GM12878 (cell line): ENCODE measurements at regions of chr3 and their contacts with region 1.

Region 1: GRCh38 chr3:177057768-177058167 is 139.5 kb downstream of the TBL1XR1 start:
- DNase-seq: peak; percentile 60
- ATAC-seq: peak; percentile 94
- H3K4me3 ChIP-seq: no peak overlapping the region
- H3K27ac ChIP-seq: peak overlapping the region; percentile 42; the same call in 1 of the 2 replicates
- H3K4me1 ChIP-seq: peaks cover 13% of the 10 kb centered on the region; the same call in 1 of the 2 replicates
- H3K27me3 ChIP-seq: no peaks in the 10 kb centered on the region
- CTCF ChIP-seq: no peak
- EP300 ChIP-seq: no peak
- POLR2A ChIP-seq: no peak
- RAD21 ChIP-seq: no peak

Region 2: DNA sequence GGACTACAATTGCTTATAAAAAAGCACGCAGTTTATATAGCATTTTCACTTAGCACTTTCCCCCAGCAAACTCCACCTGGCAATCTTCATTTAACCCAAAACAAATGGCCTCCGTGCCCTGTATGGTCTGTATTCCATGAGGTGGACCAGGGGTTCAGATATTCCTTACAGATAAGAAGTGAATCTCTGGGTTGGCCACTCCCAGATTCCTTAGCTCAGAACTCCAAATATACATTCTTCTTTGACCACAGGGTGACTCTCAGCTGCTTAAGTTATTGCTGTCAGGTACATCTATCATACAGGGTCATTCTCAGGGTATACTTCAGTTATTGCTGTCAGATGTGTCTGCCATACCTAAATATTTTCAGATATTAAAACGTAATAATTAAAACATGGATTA is 90.3 kb before region 1 on chr3:
- CTCF ChIA-PET with region 1: no interaction called
- POLR2A ChIA-PET with region 1: no interaction called
- RAD21 ChIA-PET with region 1: no interaction called
- SMC1A ChIA-PET with region 1: no interaction called
- in situ Hi-C with region 1: no loop called
- intact Hi-C with region 1: no loop called
- DNase-seq: no peak
- ATAC-seq: no peak
- H3K4me3 ChIP-seq: no peak overlapping the region
- H3K27ac ChIP-seq: no peak overlapping the region
- H3K4me1 ChIP-seq: no peaks in the 10 kb centered on the region
- H3K27me3 ChIP-seq: no peaks in the 10 kb centered on the region; a peak in 1 of 4 replicates
- CTCF ChIP-seq: no peak
- EP300 ChIP-seq: no peak
- POLR2A ChIP-seq: no peak
- RAD21 ChIP-seq: no peak

Region 3: DNA sequence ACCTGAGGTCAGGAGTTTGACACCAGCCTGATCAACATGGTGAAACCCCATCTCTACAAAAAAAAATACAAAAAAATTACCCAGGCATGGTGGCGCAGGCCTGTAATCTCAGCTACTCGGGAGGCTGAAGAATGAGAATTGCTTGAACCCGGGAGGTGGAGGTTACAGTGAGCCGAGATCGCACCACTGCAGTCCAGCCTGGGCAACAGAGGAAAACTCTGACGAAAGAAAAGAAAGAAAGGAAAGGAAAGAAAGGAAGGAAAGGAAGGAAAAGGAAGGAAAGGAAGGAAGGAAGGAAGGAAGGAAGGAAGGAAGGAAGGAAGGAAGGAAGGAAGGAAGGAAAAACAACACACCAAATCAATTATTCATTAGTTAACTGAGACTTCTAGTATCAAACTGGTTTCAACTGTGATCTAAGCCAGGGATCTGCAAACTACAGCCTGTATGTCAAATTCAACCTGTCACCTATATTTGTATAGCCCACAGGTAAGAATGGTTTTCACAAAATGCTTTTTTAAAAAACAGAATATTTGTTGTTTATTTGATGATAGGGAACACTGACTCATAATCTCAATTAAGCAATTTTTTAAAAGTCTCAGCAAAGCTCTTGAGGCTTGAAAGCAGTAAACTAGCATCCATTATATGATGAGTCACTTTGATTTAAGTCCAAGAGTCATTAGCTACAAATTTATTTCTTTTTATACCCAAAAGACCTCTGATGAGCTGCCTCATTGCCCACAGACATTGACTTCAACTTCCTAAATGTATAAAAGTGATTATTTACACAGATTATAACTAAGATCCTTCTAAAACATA is 12.0 kb after region 1 on chr3:
- CTCF ChIA-PET with region 1: interaction called, 4 read pairs
- POLR2A ChIA-PET with region 1: interaction called, 3 read pairs
- RAD21 ChIA-PET with region 1: no interaction called
- SMC1A ChIA-PET with region 1: interaction called, 11 read pairs
- in situ Hi-C with region 1: no loop called
- intact Hi-C with region 1: no loop called
- DNase-seq: no peak
- ATAC-seq: no peak
- H3K4me3 ChIP-seq: no peak overlapping the region
- H3K27ac ChIP-seq: no peak overlapping the region
- H3K4me1 ChIP-seq: no peaks in the 10 kb centered on the region
- H3K27me3 ChIP-seq: no peaks in the 10 kb centered on the region
- CTCF ChIP-seq: no peak
- EP300 ChIP-seq: no peak
- POLR2A ChIP-seq: no peak
- RAD21 ChIP-seq: no peak

Region 4: GRCh38 chr3:177079684-177080083 is 21.9 kb after region 1 on chr3:
- CTCF ChIA-PET with region 1: no interaction called
- POLR2A ChIA-PET with region 1: no interaction called
- RAD21 ChIA-PET with region 1: no interaction called
- SMC1A ChIA-PET with region 1: interaction called, 11 read pairs
- in situ Hi-C with region 1: no loop called
- intact Hi-C with region 1: no loop called
- DNase-seq: no peak
- ATAC-seq: no peak
- H3K4me3 ChIP-seq: no peak overlapping the region
- H3K27ac ChIP-seq: no peak overlapping the region
- H3K4me1 ChIP-seq: no peaks in the 10 kb centered on the region
- H3K27me3 ChIP-seq: no peaks in the 10 kb centered on the region
- CTCF ChIP-seq: no peak
- EP300 ChIP-seq: no peak
- POLR2A ChIP-seq: no peak
- RAD21 ChIP-seq: no peak

Region 5: DNA sequence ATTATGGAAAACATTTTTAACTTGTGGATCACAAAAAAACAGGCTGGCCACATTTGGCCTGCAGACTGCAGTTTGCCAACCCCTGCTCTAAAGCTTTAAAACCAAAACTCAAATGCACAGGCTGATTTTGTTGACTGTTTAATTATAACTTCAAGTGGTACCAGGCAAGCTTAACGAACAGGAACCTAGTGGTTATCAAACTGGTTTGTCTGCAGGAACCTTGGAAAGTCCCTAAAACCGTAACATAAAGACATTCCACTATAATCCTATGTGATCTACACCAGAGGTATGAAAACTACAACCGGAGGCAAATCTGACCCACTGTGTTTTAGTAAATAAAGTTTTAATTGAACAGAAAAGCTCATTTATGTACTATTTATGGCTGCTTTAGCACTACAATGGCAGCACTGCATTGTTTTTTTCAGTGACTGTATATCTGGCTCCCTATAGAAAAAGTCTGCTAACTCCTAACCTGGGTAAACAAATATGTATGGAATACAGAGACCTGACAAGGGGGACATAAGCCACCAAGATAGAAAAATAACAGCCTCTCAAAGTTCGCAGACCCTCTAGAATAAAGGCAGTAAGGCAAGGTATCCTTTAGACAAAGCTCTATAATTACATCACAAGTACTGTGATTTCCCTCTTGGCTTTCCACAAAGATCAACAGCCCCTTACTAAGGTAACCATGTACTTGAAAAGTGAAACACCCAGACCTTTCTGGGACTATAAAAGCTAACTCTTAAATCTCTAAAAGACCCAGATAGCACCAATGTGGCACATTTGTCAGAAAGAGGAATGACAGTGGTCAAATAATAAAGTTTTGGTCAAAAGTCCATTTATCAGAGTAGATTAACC is 87.4 kb after region 1 on chr3:
- CTCF ChIA-PET with region 1: interaction called, 3 read pairs
- POLR2A ChIA-PET with region 1: no interaction called
- RAD21 ChIA-PET with region 1: interaction called, 3 read pairs
- SMC1A ChIA-PET with region 1: interaction called, 13 read pairs
- in situ Hi-C with region 1: no loop called
- intact Hi-C with region 1: no loop called
- DNase-seq: peak; percentile 62
- ATAC-seq: peak; percentile 77
- H3K4me3 ChIP-seq: peak overlapping the region; percentile 41; the same call in 1 of the 2 replicates
- H3K27ac ChIP-seq: peak overlapping the region; percentile 89
- H3K4me1 ChIP-seq: peaks cover 30% of the 10 kb centered on the region
- H3K27me3 ChIP-seq: no peaks in the 10 kb centered on the region
- CTCF ChIP-seq: no peak
- EP300 ChIP-seq: peak in 1 of 2 experiments; percentile 81; a peak in 2 of 4 replicates
- POLR2A ChIP-seq: no peak
- RAD21 ChIP-seq: no peak

Region 6: DNA sequence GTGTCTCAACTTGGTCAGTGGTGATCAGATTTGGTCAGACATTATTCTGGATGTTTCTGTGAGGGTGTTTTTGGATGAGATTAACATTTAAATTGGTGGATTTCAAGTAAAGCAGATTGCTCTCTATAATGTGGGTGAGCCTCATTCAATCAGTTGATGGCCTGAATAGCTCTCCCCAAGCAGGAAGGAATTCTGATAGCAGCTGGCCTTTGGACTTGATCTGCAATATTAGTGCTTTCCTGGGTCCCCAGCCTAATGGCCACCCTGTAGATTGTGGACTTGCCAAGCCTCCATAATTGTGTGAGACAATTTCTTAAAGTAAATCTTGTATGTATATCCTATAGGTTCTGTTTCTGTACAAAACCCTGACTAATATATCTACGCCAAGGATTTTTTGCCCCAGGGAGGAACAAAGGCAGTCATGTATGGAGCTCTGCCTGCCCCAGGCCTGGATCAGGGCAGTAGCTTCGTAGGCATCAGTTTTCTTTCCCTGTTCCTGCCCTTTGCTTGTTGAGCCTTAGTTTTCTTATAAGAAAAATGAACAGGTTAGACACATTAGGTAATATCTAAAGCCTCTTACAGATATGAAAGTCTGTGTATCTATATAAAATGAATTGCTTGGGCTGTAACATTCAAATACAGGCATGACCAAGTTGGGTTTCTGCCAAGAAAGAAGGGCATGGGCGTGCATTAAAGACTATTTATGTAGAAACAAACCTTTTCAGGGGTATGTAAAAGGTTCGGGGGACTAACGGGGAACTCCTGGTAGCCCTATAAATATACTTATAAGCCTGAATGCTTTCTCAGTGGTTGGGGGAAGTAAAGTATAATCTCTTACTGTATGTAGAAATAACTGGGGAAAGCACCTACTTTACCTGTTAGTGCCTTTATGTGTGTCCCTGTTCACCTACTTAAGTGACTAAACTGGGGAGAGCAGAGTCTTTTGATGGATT is 293.7 kb after region 1 on chr3:
- CTCF ChIA-PET with region 1: no interaction called
- POLR2A ChIA-PET with region 1: no interaction called
- RAD21 ChIA-PET with region 1: no interaction called
- SMC1A ChIA-PET with region 1: interaction called, 3 read pairs
- in situ Hi-C with region 1: loop called (anchors 5 kb)
- intact Hi-C with region 1: loop called (anchors 5 kb)
- DNase-seq: peak; percentile 87
- ATAC-seq: peak; percentile 96
- H3K4me3 ChIP-seq: no peak overlapping the region
- H3K27ac ChIP-seq: peak overlapping the region; percentile 57
- H3K4me1 ChIP-seq: peaks cover 18% of the 10 kb centered on the region
- H3K27me3 ChIP-seq: no peaks in the 10 kb centered on the region
- CTCF ChIP-seq: no peak
- EP300 ChIP-seq: peak in 1 of 2 experiments; percentile 45; a peak in 2 of 4 replicates
- POLR2A ChIP-seq: no peak
- RAD21 ChIP-seq: peak; percentile 4; the same call in 1 of the 2 replicates

Region 7: GRCh38 chr3:177597311-177598096 is 539.7 kb after region 1 on chr3:
- CTCF ChIA-PET with region 1: no interaction called
- POLR2A ChIA-PET with region 1: no interaction called
- RAD21 ChIA-PET with region 1: no interaction called
- SMC1A ChIA-PET with region 1: no interaction called
- in situ Hi-C with region 1: no loop called
- intact Hi-C with region 1: loop called (anchors 5 kb)
- DNase-seq: no peak
- ATAC-seq: peak; percentile 78
- H3K4me3 ChIP-seq: no peak overlapping the region
- H3K27ac ChIP-seq: peak overlapping the region; percentile 42; the same call in 1 of the 2 replicates
- H3K4me1 ChIP-seq: peaks cover 15% of the 10 kb centered on the region
- H3K27me3 ChIP-seq: no peaks in the 10 kb centered on the region
- CTCF ChIP-seq: no peak
- EP300 ChIP-seq: no peak
- POLR2A ChIP-seq: no peak
- RAD21 ChIP-seq: no peak

Region 8: GRCh38 chr3:177777699-177778098 is 719.9 kb after region 1 on chr3:
- CTCF ChIA-PET with region 1: interaction called, 31 read pairs
- POLR2A ChIA-PET with region 1: no interaction called
- RAD21 ChIA-PET with region 1: interaction called, 3 read pairs
- SMC1A ChIA-PET with region 1: no interaction called
- in situ Hi-C with region 1: loop called (anchors 5 kb)
- intact Hi-C with region 1: no loop called
- DNase-seq: peak; percentile 20
- ATAC-seq: peak; percentile 97
- H3K4me3 ChIP-seq: no peak overlapping the region
- H3K27ac ChIP-seq: no peak overlapping the region
- H3K4me1 ChIP-seq: no peaks in the 10 kb centered on the region; the same call in 1 of the 2 replicates
- H3K27me3 ChIP-seq: no peaks in the 10 kb centered on the region
- CTCF ChIP-seq: peak; percentile 74 to 80 (median 78)
- EP300 ChIP-seq: no peak
- POLR2A ChIP-seq: no peak
- RAD21 ChIP-seq: peak; percentile 87